Ascending aorta (tissue), 2 donors: ENCODE measurements at regions of chr14 and their contacts with region 1.

Region 1: DNA sequence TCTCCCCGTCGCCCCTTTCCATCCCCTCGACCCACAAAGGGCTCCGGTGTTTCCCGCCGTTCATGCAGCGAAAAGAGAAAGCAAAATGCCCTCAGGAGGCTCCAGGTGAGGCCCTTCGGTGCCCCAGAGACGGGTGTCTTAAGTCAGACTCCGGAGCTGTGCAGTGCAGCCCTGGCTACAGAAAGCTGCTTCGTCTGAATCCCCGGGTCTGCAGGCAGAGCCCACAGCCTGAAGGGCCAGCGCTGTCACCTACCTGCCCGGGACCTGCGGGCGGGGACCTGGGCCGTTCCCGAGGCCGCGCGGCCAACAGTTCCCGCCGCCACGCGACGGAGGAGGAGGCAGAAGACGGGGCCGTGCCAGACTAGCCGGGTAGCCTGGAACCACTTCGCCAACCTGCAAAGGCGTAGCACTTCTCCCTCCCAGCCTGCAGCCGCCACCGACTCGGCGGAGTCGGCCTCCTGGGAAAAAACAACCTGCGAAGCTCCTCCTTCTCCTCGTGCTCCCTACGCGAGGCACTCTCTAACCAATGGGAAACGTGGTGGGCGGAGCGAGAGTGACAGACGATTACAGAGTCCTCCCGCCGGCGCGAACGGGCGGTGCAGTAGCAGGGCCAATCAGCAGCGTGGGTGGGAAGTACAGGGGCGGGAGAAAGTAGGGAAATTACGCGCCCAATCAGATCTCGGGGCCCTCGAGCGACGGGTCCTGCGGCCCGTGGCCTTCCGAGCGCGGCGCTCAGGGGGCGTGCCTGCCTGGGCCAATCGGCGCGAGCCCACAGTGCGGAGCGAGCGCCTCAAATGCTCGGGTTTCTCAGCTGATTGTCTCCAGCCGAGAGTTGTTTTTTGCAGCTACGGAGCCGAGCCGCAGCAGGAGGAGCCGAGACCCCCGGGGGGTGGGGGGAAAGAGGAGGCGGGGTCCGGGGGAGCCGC is at the starts of genes GPR137C and TXNDC16:
- DNase-seq: peak; percentile 99 to 100
- H3K4me3 ChIP-seq: peak within 1 kb of the TSS; percentile 82 to 93
- H3K27ac ChIP-seq: peak within 1 kb of the TSS; percentile 80 to 93
- H3K4me1 ChIP-seq: peaks cover 0 to 13% of the 10 kb centered on the region in 2 donors
- H3K27me3 ChIP-seq: no peaks in the 10 kb centered on the region
- CTCF ChIP-seq: no peak
- total RNA-seq, gene GPR137C: not detected
- total RNA-seq, gene TXNDC16: 1.8 TPM

Region 2: DNA sequence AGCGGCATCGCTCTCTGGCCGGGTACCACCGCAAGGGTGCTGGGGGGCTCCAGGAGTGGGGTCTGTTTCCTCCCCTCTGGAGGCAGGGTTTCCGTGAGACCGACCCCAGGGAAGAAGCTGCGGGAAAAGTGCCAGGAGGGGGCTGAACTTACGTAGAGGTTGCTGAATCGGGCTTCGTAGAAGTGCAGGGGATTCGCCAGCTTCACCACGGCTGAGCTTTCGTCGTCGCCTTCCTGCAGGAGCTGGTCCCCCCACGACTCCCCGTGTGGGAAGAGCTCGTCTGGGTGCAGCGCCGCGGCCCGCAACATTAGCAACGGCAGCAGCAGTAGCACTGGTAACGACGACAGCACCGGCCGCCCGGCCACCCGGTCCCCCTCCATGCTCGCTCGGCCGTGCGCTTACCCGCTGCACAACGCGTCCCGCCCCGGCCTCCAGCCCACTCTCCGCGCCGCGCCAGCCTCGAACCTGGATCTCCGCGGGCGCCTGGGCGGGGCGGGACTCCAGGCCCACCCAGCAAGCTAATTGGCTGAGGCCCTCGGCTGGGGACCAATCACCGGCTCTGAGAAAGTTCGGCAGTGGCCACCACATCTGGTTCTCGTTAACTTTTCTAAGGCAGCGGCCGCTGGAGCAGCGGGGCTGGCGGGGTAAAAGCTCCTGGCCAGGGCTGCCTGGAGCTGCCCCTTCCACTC is 483.6 kb before region 1 on chr14 and contains the start of gene NID2:
- intact Hi-C with region 1: loop called (anchors 10 kb)
- DNase-seq: peak in 1 of 2 donors; percentile 90
- H3K4me3 ChIP-seq: peak within 1 kb of the TSS; percentile 60 to 83
- H3K27ac ChIP-seq: peak within 1 kb of the TSS; percentile 77 to 88
- H3K4me1 ChIP-seq: peaks cover 2 to 3% of the 10 kb centered on the region in 2 donors
- H3K27me3 ChIP-seq: no peaks in the 10 kb centered on the region
- CTCF ChIP-seq: peak in 1 of 3 experiments; percentile 9
- total RNA-seq, gene NID2: 12.2 TPM

Region 3: GRCh38 chr14:52729925-52730667 is 177.8 kb after region 1 on chr14 and contains the start of gene STYX:
- intact Hi-C with region 1: loop called (anchors 1 kb)
- DNase-seq: peak; percentile 98 to 99
- H3K4me3 ChIP-seq: peak within 1 kb of the TSS; percentile 88 to 99
- H3K27ac ChIP-seq: peak within 1 kb of the TSS; percentile 85 to 93
- H3K4me1 ChIP-seq: peaks cover 0 to 4% of the 10 kb centered on the region in 2 donors
- H3K27me3 ChIP-seq: no peaks in the 10 kb centered on the region
- CTCF ChIP-seq: peak in 1 of 3 experiments; percentile 19
- total RNA-seq, gene STYX: 5.2 TPM

Region 4: GRCh38 chr14:52950898-52951689 is 398.8 kb after region 1 on chr14 and contains the start of gene FERMT2:
- intact Hi-C with region 1: loop called (anchors 5 kb)
- DNase-seq: peak; percentile 36 to 92
- H3K4me3 ChIP-seq: peak within 1 kb of the TSS; percentile 87 to 100
- H3K27ac ChIP-seq: peak within 1 kb of the TSS; percentile 98
- H3K4me1 ChIP-seq: peaks cover 5 to 31% of the 10 kb centered on the region in 2 donors
- H3K27me3 ChIP-seq: no peaks in the 10 kb centered on the region
- CTCF ChIP-seq: peak in 1 of 3 experiments; percentile 26
- total RNA-seq, gene FERMT2: 101 TPM

Region 5: DNA sequence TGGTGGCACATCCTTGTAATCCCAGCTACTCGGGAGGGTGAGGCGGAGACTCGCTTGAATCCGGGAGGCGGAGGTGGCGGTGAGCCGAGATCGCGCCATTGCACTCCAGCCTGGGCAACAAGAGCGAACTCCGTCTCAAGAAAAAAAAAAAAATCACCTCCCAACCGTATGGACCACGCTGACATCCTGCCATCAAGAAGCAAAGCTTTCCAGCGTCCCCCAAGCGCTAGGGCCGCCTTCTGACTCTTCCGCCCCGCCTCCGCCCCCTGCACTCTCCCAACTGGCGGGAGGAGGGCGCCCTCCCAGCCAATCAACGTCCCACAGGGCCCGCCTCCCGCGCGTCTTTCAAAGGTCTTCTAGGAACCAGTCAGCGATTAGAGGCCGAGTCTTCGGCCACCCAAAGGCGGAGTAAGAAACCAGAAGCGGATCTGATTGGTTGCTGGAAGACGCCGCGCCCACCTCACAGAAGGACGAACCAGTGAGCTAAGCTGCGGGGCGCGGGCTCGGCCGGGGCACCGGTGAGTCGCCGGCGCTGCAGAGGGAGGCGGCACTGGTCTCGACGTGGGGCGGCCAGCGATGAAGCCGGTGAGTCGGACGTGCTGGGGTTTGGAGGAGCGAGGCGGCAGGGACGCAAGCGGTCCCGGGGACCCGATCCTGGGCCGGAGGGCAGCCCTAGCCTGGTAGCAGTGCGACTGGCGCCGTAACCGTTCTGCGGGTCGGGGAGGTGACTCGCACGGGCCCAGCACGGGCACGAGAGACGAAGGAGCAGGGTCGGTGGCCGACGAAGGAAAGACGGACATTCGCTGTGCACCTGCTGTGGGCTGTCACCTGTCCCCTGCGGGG is 1844.4 kb after region 1 on chr14 and contains the start of gene CDKN3:
- intact Hi-C with region 1: loop called (anchors 10 kb)
- DNase-seq: peak; percentile 98 to 99
- H3K4me3 ChIP-seq: peak within 1 kb of the TSS; percentile 72 to 76
- H3K27ac ChIP-seq: peak within 1 kb of the TSS in 1 of 2 donors; percentile 24
- H3K4me1 ChIP-seq: peaks cover 5 to 12% of the 10 kb centered on the region in 2 donors
- H3K27me3 ChIP-seq: no peaks in the 10 kb centered on the region
- CTCF ChIP-seq: peak in 2 of 3 experiments; percentile 52 to 58
- total RNA-seq, gene CDKN3: not detected